Naive thymus-derived CD4-positive, alpha-beta T cell (primary cell): ENCODE measurements at regions of chr9 and their contacts with region 1.

Region 1: GRCh38 chr9:14616188-14616982 is 76.8 kb downstream of the ZDHHC21 start:
- DNase-seq: peak in 6 of 9 donors; percentile 6 to 41 (median 27)
- ATAC-seq: peak; percentile 41
- H3K4me3 ChIP-seq: no peak overlapping the region
- H3K4me3 Mint-ChIP-seq: no peak overlapping the region
- H3K27ac ChIP-seq: no peak overlapping the region
- H3K27ac Mint-ChIP-seq: no peak overlapping the region
- H3K4me1 ChIP-seq: no peaks in the 10 kb centered on the region
- H3K4me1 Mint-ChIP-seq: no peaks in the 10 kb centered on the region
- H3K27me3 ChIP-seq: no peaks in the 10 kb centered on the region
- H3K27me3 Mint-ChIP-seq: no peaks in the 10 kb centered on the region

Region 2: DNA sequence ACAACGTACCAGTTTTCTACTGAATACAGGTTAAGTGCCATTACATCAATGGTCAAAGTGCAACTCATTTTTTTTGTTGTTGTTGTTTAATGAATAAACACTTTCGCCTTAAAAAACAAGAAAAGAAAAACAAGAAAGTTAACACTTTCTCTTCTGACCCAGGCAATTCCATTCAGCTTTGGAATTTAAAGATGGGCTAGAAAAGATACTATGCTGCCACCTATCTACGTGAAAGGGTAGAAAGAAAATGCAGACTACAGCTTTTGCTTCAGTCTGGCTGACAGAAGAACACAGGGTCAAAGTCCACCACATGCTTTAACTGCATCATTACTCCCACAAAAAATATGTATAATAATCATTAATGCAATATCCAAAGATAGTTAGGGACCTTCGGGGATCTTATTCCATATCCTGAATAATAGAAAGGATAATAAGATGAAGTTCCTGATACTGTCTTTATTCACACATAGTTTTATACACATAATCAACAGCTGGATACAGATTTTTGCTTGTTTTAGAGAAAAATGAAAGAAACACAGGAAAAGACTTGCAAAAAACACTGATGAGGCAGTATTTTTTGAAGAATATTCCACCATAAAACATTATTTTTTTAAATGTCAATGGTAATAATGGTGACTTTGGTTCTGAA is 36.5 kb after region 1 on chr9:
- CTCF ChIA-PET with region 1: no interaction called
- POLR2A ChIA-PET with region 1: no interaction called
- intact Hi-C with region 1: loop called in 1 of 2 experiments (anchors 1 kb)
- DNase-seq: no peak
- ATAC-seq: no peak
- H3K4me3 ChIP-seq: no peak overlapping the region
- H3K4me3 Mint-ChIP-seq: no peak overlapping the region
- H3K27ac ChIP-seq: no peak overlapping the region
- H3K27ac Mint-ChIP-seq: no peak overlapping the region
- H3K4me1 ChIP-seq: no peaks in the 10 kb centered on the region
- H3K4me1 Mint-ChIP-seq: peaks cover 0 to 4% (median 0%) of the 10 kb centered on the region in 7 donors
- H3K27me3 ChIP-seq: no peaks in the 10 kb centered on the region
- H3K27me3 Mint-ChIP-seq: no peaks in the 10 kb centered on the region

Region 3: GRCh38 chr9:14674630-14675029 is 58.2 kb after region 1 on chr9:
- CTCF ChIA-PET with region 1: no interaction called
- POLR2A ChIA-PET with region 1: no interaction called
- intact Hi-C with region 1: loop called in 1 of 2 experiments (anchors 5 kb)
- DNase-seq: no peak
- ATAC-seq: no peak
- H3K4me3 ChIP-seq: no peak overlapping the region
- H3K4me3 Mint-ChIP-seq: no peak overlapping the region
- H3K27ac ChIP-seq: no peak overlapping the region
- H3K27ac Mint-ChIP-seq: no peak overlapping the region
- H3K4me1 ChIP-seq: no peaks in the 10 kb centered on the region
- H3K4me1 Mint-ChIP-seq: peaks cover 0 to 10% (median 0%) of the 10 kb centered on the region in 7 donors
- H3K27me3 ChIP-seq: no peaks in the 10 kb centered on the region
- H3K27me3 Mint-ChIP-seq: no peaks in the 10 kb centered on the region

Region 4: DNA sequence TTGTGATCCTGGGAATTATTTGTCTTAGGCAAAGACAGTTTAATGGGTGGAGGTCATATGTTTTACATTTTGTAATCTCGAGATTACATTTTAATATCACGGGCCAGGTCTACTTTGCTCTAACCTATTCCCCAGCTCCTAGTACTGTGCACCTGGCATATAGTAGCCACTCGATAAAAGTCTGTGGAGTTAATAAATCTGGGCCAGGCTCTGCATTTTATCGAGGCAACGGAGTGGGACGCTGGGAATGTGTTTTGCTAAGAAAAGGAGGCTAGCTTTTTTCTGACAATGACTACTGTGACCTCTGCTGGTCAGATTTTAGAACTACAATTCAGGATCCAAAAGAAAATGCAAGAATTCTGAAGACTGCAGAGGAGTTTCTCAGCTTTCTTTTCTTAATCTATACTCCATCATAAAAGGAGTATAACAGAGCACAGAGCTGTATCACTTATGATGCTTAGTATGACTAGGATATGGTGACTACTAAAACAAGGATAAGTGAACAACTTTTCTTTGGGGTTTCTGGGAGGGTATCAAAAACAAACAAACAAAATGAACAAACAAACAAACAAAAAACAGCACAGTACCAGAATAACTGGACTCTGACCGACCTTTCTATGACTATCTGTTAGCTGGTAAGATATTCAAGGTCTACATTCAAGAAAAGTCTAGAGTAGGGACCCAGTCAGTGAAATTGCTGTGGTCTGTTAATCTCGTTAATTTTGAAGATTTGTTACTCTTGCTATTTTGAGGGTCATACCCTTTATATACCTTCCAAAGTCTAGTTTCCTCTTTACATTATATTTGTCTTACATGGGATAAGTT is 152.2 kb after region 1 on chr9:
- CTCF ChIA-PET with region 1: interaction called, 29 read pairs
- POLR2A ChIA-PET with region 1: no interaction called
- intact Hi-C with region 1: loop called in 1 of 2 experiments (anchors 1 kb)
- DNase-seq: peak in 5 of 9 donors; percentile 24 to 35 (median 28)
- ATAC-seq: no peak
- H3K4me3 ChIP-seq: no peak overlapping the region
- H3K4me3 Mint-ChIP-seq: no peak overlapping the region
- H3K27ac ChIP-seq: no peak overlapping the region
- H3K27ac Mint-ChIP-seq: no peak overlapping the region
- H3K4me1 ChIP-seq: no peaks in the 10 kb centered on the region
- H3K4me1 Mint-ChIP-seq: no peaks in the 10 kb centered on the region
- H3K27me3 ChIP-seq: peaks cover 0 to 5% of the 10 kb centered on the region in 2 donors
- H3K27me3 Mint-ChIP-seq: peaks cover 8 to 40% (median 17%) of the 10 kb centered on the region in 5 donors

Region 5: GRCh38 chr9:15135164-15135792 is 518.9 kb after region 1 on chr9:
- CTCF ChIA-PET with region 1: interaction called, 3 read pairs
- POLR2A ChIA-PET with region 1: no interaction called
- intact Hi-C with region 1: loop called in 1 of 2 experiments (anchors 1 kb)
- DNase-seq: peak in 8 of 9 donors; percentile 27 to 73 (median 59)
- ATAC-seq: peak; percentile 92
- H3K4me3 ChIP-seq: no peak overlapping the region
- H3K4me3 Mint-ChIP-seq: peak overlapping the region in 6 of 10 donors; percentile 3 to 40 (median 32)
- H3K27ac ChIP-seq: no peak overlapping the region
- H3K27ac Mint-ChIP-seq: peak overlapping the region in 1 of 9 donors; percentile 32
- H3K4me1 ChIP-seq: no peaks in the 10 kb centered on the region
- H3K4me1 Mint-ChIP-seq: peaks cover 4 to 10% (median 5%) of the 10 kb centered on the region in 7 donors
- H3K27me3 ChIP-seq: no peaks in the 10 kb centered on the region
- H3K27me3 Mint-ChIP-seq: peaks cover 0 to 4% (median 3%) of the 10 kb centered on the region in 5 donors